ENCODE measurements at regions of chrX and their contacts with region 1.

Region 1: DNA sequence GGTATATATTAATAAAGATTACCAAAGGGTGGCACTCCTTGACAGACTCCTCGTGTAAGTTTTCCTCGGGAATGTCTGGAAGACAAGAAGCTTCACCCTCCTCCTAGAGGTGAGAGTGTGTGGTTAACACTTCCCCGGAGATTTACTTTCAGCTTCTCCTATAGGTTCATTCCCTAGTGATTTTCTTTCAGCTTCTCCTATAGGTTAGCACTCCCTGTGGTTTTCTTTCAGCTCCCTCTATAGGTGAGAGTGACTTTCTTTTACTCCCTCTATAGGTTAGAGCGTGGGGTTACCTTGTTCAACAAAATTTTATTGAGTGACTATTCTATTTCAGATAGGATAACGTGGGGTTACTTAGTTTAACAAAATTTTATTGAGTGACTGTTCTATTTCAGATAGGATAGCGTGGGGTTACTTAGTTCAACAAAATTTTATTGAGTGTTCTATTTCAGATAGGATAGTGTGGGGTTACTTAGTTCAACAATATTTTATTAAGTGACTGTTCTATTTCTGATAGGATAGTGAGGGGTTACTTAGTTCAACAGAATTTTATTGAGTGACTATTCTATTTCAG is 106.0 kb upstream of the PLAC1 start:
- DNase-seq: no peak
- H3K4me3 ChIP-seq: no peak overlapping the region
- H3K27ac ChIP-seq: no peak overlapping the region
- H3K4me1 ChIP-seq: no peaks in the 10 kb centered on the region
- H3K27me3 ChIP-seq: no peaks in the 10 kb centered on the region
- CTCF ChIP-seq: peak in 3 of 5 experiments; percentile 11 to 38 (median 25)
- EP300 ChIP-seq: no peak
- POLR2A ChIP-seq: no peak

Region 2: GRCh38 chrX:134355996-134356395 is 408.3 kb before region 1 on chrX:
- in situ Hi-C with region 1: no loop called
- intact Hi-C with region 1: no loop called
- DNase-seq: no peak
- H3K4me3 ChIP-seq: no peak overlapping the region
- H3K27ac ChIP-seq: no peak overlapping the region
- H3K4me1 ChIP-seq: no peaks in the 10 kb centered on the region
- H3K27me3 ChIP-seq: no peaks in the 10 kb centered on the region
- CTCF ChIP-seq: no peak
- EP300 ChIP-seq: no peak
- POLR2A ChIP-seq: no peak

Region 3: DNA sequence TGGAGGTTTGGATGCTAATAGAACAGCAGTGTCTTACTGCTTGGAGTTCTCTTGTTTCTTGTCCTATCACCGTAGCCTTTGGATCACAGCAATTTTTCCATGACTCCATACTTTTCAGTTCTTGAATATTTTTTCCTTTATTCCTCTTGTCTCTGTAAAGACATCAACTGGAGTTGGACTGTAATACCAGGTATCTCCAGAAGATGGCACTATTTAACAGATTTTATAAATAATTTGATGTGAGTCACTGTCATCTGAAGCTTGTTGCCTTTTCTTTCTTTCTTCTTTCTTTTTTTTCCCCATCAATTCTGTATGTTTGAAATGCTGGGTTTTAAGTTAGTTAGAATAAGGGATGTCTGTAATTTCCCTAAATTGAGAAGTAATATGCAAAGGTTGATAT is 280.3 kb before region 1 on chrX:
- in situ Hi-C with region 1: loop called in 1 of 4 experiments (anchors 25 kb)
- intact Hi-C with region 1: no loop called
- DNase-seq: no peak
- H3K4me3 ChIP-seq: no peak overlapping the region
- H3K27ac ChIP-seq: no peak overlapping the region
- H3K4me1 ChIP-seq: no peaks in the 10 kb centered on the region
- H3K27me3 ChIP-seq: no peaks in the 10 kb centered on the region
- CTCF ChIP-seq: peak; percentile 47 to 62 (median 60)
- EP300 ChIP-seq: no peak
- POLR2A ChIP-seq: no peak

Region 4: GRCh38 chrX:134520860-134521390 is 243.4 kb before region 1 on chrX:
- in situ Hi-C with region 1: loop called in 2 of 4 experiments (anchors 25 kb)
- intact Hi-C with region 1: no loop called
- DNase-seq: peak; percentile 23
- H3K4me3 ChIP-seq: no peak overlapping the region
- H3K27ac ChIP-seq: no peak overlapping the region
- H3K4me1 ChIP-seq: no peaks in the 10 kb centered on the region
- H3K27me3 ChIP-seq: no peaks in the 10 kb centered on the region
- CTCF ChIP-seq: peak; percentile 24 to 37 (median 32)
- EP300 ChIP-seq: no peak
- POLR2A ChIP-seq: no peak

Region 5: DNA sequence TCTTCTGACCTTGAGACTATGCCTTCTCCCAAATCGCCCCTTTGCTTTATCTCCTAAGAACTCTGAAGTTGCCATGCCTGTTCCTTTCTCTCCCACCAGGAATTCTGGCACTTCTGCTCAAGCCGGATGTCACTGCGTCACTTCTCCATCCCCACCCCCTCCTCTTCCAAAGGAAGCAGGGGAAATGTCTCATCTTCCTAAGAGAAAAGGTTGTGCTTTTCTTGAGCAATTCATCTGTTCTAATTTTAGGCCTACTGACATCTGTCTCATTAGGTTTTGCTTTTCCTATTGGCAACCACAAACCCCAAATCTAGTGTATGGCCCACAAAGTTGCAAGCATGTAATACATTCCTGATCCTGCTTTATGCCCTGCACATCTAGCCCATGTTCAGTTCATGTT is 57.1 kb after region 1 on chrX:
- in situ Hi-C with region 1: no loop called
- intact Hi-C with region 1: no loop called
- DNase-seq: no peak
- H3K4me3 ChIP-seq: no peak overlapping the region
- H3K27ac ChIP-seq: no peak overlapping the region
- H3K4me1 ChIP-seq: no peaks in the 10 kb centered on the region
- H3K27me3 ChIP-seq: no peaks in the 10 kb centered on the region
- CTCF ChIP-seq: no peak
- EP300 ChIP-seq: no peak
- POLR2A ChIP-seq: no peak

Measured in transverse colon (tissue), 4 donors.